GM13977 (cell line): ENCODE measurements at regions of chr11 and their contacts with region 1.

Region 1: DNA sequence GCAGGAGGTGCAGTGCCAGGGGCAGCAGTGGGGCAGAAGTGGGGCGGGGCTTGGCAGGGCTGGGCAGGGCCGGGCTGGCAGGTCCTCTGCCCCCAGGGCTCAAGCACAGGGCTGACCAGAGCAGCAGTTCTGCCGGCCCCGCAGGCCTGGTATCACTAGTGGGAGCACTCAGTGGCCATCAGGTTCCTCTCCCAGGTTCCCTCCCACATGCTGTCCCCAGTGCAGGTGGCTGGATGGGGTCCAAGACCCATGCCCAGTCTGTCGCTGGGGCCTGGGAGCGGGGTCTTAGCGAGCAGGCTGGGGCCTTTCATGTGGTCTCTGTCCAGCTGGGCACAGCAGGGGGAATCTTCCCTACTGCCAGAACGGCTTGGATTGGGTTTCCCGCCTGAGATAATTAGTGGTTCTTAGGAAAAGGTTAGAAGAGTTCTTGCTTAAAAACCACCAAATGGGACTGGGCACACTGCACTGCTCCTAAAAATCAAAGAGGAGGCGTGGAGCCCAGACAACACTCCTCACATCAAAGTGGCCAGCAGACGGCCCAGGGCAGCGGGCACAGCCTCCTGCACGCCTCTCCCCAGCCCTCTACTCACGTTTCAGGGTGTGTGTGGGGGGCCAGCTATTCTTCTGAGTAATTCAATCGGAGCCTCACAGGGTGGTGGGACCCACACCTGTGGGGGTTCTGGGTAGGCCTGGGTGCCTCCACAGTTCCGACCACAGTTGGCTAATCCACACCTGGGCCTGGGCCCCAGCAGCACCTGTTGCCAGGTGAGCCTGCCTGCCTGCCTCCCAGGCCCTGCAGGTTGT is 45.6 kb downstream of the TPCN2 start:
- DNase-seq: no peak
- CTCF ChIP-seq: no peak

Region 2: GRCh38 chr11:69000831-69001242 is 93.5 kb before region 1 on chr11:
- in situ Hi-C with region 1: no loop called
- DNase-seq: no peak
- CTCF ChIP-seq: no peak

Region 3: DNA sequence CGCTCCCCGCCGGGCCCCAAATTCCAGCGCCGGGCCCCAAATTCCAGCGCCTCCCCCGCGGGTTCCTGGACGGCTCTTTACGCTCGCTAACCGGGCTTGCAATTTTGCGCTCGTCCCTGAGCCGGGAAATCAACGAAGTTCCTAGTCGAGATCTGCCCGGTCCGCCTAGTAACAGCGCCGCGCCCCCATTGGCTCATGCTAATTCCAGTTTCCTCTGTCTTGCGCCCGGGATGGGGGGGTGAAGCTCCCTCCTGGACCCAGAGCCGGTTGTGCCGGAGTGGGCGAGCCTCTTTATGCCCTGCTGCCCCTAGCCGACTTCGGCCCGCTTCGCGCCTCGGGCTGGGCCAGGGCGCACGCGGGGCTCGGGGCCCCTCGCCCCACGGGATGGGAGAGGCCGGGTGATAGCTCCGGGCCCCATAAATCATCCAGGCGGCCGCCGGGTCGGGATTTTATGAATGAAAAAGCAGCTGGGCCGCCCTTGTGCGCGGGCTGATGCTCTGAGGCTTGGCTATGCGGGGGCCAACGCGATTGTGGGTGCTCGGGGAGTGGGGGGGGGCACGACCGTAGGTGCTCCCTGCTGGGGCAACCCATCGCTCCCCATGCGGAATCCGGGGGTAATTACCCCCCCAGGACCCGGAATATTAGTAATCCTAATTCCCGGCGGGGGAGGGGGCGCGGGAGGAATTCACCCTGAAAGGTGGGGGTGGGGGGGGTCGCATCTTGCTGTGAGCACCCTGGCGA is 544.8 kb after region 1 on chr11:
- in situ Hi-C with region 1: loop called (anchors 10 kb)
- DNase-seq: peak; percentile 85
- CTCF ChIP-seq: no peak